ENCODE measurements at regions of chr2 and their contacts with region 1.

Region 1: DNA sequence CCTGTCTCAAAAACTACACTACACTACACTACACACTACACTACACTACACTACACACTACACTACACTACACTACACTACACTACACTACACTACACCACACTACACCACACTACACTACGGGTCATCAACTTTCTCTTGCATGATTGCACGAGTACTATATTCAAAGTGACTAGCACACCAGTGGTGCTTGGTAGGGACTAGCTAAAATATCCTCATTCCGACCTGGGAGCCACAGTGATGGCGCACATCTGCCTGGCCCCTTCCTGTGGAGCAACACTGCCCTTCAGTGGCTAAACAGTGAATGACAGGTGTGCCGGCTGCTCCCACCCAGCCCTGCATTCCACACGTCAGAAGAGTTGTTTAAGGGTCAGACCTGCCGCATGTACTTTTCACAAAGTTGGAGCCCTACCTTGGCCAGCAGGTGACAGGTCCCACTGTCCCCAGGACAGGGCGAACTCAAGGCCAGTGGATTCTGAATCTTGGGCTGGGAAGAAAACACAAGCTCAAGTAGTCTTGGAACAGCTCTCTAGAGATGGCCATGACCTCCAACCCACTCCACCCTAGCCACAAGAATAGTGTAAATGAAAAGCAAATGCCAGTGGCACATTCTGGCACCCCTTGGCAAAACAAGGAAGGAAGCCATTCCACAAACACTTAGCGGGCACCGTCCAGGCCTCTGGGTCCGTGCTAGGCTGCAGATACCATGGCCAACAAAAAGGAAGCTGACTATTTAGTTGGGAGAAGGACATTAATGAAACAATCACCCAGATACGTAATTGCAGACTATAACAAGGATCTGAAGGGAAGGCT is 79.7 kb upstream of the MSH2 start:
- DNase-seq: peak; percentile 86
- ATAC-seq: peak; percentile 94

Region 2: DNA sequence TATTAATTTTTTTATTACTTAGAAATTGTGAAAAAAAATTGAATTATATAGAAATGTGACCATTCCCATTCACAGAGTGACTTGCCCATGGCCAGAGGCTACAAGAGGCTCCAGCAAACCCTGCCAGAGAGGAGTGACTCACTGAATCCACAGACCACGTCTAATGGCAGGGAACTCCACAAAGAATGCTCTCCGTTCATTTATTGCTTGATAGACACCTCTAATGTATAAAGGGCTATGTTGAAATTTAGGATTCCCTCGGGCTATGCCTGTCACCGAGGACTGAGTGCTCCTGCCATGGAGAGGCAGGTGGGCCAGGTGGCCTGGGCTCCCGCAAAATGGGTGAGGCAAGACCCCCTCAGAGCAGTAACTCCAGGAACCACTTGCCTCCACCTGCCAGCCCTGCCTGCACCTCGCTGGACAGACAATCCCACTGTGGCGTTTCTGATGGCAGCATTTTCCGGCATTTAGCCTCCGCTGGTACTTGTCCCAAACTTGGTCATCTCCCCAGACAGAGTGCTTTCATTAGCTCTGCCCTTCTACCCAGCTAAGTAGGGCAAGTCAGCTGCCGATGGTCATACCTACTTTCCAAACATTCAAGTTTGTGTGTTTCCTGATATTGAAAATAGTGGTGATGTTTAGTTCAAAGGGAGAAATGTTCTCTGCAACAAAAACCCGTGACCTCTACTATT is 1471.5 kb before region 1 on chr2:
- intact Hi-C with region 1: no loop called
- DNase-seq: no peak
- ATAC-seq: no peak

Region 3: GRCh38 chr2:46645681-46646162 is 677.5 kb before region 1 on chr2:
- intact Hi-C with region 1: loop called (anchors 10 kb)
- DNase-seq: no peak
- ATAC-seq: peak; percentile 62

Region 4: DNA sequence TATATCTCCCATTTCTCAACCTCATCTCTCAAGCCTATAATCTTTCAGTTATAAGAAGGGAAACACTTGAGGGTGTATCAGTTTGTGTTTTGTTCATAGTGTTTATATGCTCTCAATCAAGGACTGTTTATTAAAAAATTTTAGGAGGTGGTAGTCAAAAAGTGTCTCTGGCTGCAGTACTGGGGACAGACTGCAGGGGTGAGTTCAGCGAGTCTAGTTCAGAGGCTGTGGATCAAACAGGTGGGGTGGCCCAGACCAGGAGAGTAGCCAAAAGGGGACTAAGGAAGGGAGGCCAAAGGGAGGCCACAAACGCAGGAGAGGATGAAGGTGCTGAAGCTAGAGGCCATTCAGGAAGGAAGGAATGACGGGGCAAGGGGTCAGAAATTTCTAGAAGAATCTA is 216.0 kb after region 1 on chr2:
- intact Hi-C with region 1: no loop called
- DNase-seq: no peak
- ATAC-seq: no peak